Prostate gland (tissue), 2 donors: ENCODE measurements at regions of chrX and their contacts with region 1.

Region 1: DNA sequence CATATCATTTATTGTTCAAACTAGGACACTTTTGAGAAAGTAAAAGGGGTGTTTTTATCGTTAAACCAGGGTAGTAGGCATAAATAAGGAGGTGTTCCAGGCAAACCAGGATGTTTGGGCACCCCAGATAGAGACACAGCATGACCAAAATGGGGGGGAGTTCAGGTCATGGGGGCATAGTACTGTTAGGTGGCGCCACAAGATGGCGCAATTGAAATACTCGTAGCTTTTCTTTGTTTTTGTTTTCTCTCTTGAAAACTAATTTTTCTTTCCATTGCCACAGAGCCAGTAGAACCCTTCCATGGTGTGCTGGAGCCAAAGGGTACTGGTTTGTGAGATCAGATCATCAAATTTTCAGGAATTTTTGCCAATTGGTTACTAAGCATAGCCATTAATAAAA is 283.4 kb downstream of the BCOR start:
- DNase-seq: no peak
- H3K4me3 ChIP-seq: no peak overlapping the region
- H3K27ac ChIP-seq: no peak overlapping the region
- H3K4me1 ChIP-seq: no peaks in the 10 kb centered on the region
- H3K27me3 ChIP-seq: no peaks in the 10 kb centered on the region
- CTCF ChIP-seq: peak in 3 of 4 experiments; percentile 23 to 43 (median 38)
- POLR2A ChIP-seq: no peak

Region 2: GRCh38 chrX:39361736-39362135 is 452.7 kb before region 1 on chrX:
- intact Hi-C with region 1: no loop called
- DNase-seq: no peak
- H3K4me3 ChIP-seq: no peak overlapping the region
- H3K27ac ChIP-seq: no peak overlapping the region
- H3K4me1 ChIP-seq: no peaks in the 10 kb centered on the region
- H3K27me3 ChIP-seq: no peaks in the 10 kb centered on the region
- CTCF ChIP-seq: no peak
- POLR2A ChIP-seq: no peak

Region 3: GRCh38 chrX:39665830-39666518 is 148.4 kb before region 1 on chrX:
- intact Hi-C with region 1: no loop called
- DNase-seq: no peak
- H3K4me3 ChIP-seq: no peak overlapping the region
- H3K27ac ChIP-seq: no peak overlapping the region
- H3K4me1 ChIP-seq: no peaks in the 10 kb centered on the region
- H3K27me3 ChIP-seq: no peaks in the 10 kb centered on the region
- CTCF ChIP-seq: no peak
- POLR2A ChIP-seq: no peak

Region 4: GRCh38 chrX:39755143-39756032 is 59.0 kb before region 1 on chrX:
- intact Hi-C with region 1: loop called (anchors 10 kb)
- DNase-seq: peak; percentile 85
- H3K4me3 ChIP-seq: no peak overlapping the region
- H3K27ac ChIP-seq: peak overlapping the region; percentile 51 to 62
- H3K4me1 ChIP-seq: no peaks in the 10 kb centered on the region
- H3K27me3 ChIP-seq: no peaks in the 10 kb centered on the region
- CTCF ChIP-seq: no peak
- POLR2A ChIP-seq: no peak

Region 5: DNA sequence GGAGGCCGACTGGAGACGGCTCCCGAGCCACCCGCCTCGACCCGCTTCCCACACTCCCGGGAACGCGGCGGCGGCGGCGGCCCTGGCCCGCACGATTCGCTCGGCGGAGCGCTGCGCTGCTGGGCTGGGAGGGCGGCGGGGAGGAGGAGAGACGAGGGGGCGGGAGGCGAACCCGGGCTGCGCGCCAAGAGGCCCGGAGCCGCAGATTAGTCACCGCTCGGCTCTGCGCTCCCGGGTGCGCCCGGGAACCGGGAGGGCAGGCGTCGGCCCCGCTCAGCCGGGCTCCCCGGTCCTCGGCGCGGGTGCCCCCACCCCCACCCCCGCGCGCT is 294.5 kb after region 1 on chrX:
- intact Hi-C with region 1: loop called (anchors 10 kb)
- DNase-seq: peak; percentile 72
- H3K4me3 ChIP-seq: peak overlapping the region; percentile 51 to 61
- H3K27ac ChIP-seq: peak overlapping the region; percentile 86 to 95
- H3K4me1 ChIP-seq: no peaks in the 10 kb centered on the region
- H3K27me3 ChIP-seq: no peaks in the 10 kb centered on the region
- CTCF ChIP-seq: no peak
- POLR2A ChIP-seq: peak; percentile 44

Region 6: GRCh38 chrX:40153335-40154249 is 339.2 kb after region 1 on chrX:
- intact Hi-C with region 1: loop called (anchors 10 kb)
- DNase-seq: no peak
- H3K4me3 ChIP-seq: peak overlapping the region; percentile 29 to 36
- H3K27ac ChIP-seq: peak overlapping the region; percentile 69 to 80
- H3K4me1 ChIP-seq: peaks cover 3% of the 10 kb centered on the region
- H3K27me3 ChIP-seq: no peaks in the 10 kb centered on the region
- CTCF ChIP-seq: peak in 1 of 4 experiments; percentile 19
- POLR2A ChIP-seq: no peak

Region 7: DNA sequence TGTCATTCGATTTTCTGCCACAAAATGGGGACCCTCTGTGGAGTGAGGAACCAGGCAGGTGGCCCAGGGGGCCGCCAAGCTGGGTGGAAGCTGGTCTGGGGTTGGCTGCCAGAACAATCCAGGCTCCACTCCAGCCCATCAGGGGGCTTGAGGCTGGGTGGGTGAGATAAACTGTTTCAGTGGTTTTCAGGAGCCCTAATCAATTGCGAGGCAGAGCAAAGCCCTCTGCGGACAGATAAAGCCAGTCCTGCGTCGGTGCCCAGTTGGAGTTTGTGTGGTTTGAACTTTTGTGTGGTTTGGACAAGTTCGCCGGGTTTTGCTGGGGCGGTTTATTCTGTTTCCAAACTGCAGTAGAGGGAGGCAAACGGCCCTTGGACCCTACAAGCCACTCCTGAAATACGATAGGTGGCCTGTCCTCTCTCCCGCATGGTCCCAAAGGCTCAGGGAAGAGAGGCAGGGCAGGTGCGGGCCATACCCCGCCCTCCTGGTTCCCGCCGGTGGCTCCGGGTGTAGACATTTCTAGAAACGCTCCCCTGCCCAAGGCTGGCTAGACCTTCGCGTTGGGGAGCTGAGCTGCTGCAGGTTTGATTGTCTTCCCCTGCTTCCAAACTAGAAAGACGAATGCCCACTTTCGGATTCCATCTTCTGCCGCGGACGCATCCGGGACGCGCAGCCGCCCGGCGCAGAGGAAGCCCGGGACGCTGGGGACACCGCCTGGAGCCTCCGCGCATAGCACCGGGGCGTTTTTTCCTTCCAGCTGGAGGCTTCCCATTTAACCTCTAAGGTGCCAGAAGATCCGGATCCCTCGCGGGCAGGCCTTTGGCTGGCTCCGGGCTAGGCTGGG is 452.3 kb after region 1 on chrX:
- intact Hi-C with region 1: loop called (anchors 10 kb)
- DNase-seq: peak; percentile 44
- H3K4me3 ChIP-seq: peak overlapping the region; percentile 29 to 35
- H3K27ac ChIP-seq: peak overlapping the region; percentile 69 to 71
- H3K4me1 ChIP-seq: no peaks in the 10 kb centered on the region
- H3K27me3 ChIP-seq: no peaks in the 10 kb centered on the region
- CTCF ChIP-seq: peak; percentile 20 to 69 (median 58)
- POLR2A ChIP-seq: no peak